Activated B cell treated with CpG ODN at 0.5 μM for 24 hours (primary cell): ENCODE measurements at regions of chr12 and their contacts with region 1.

Region 1: GRCh38 chr12:6937481-6938297 is 5.9 kb upstream of the RNU7-1 start:
- DNase-seq: peak; percentile 84
- ATAC-seq: peak; percentile 92
- H3K4me3 Mint-ChIP-seq: peak overlapping the region; percentile 84
- H3K27ac Mint-ChIP-seq: peak overlapping the region; percentile 91
- H3K4me1 Mint-ChIP-seq: peaks cover 35% of the 10 kb centered on the region
- H3K27me3 Mint-ChIP-seq: no peaks in the 10 kb centered on the region
- CTCF ChIP-seq: no peak

Region 2: DNA sequence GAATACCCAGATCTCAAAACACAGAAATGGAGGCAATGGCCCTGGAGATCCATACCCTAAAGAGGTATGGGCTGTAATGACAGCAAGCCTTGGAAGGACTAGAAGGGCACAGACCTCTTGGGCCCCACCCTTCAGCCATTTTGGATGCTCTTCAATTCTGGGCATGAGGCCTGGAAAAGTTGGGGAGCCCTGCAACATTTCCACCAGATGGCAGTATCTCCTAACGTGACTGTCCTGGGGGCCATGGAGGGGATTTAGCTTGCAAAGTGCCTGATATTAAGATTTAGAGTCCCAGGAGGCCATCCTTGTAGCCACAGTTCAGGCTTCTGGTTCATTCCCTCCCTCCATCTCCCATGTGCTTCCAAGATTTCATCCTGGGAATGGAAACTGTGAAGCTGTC is 1863.8 kb before region 1 on chr12:
- CTCF ChIA-PET with region 1: no interaction called
- POLR2A ChIA-PET with region 1: no interaction called
- intact Hi-C with region 1: no loop called
- DNase-seq: no peak
- ATAC-seq: no peak
- H3K4me3 Mint-ChIP-seq: no peak overlapping the region
- H3K27ac Mint-ChIP-seq: no peak overlapping the region
- H3K4me1 Mint-ChIP-seq: no peaks in the 10 kb centered on the region
- H3K27me3 Mint-ChIP-seq: peaks cover 8% of the 10 kb centered on the region
- CTCF ChIP-seq: no peak

Region 3: GRCh38 chr12:6627616-6628015 is 310.1 kb before region 1 on chr12:
- CTCF ChIA-PET with region 1: no interaction called
- POLR2A ChIA-PET with region 1: no interaction called
- intact Hi-C with region 1: no loop called
- DNase-seq: no peak
- ATAC-seq: peak; percentile 37
- H3K4me3 Mint-ChIP-seq: peak overlapping the region; percentile 81
- H3K27ac Mint-ChIP-seq: peak overlapping the region; percentile 85
- H3K4me1 Mint-ChIP-seq: peaks cover 60% of the 10 kb centered on the region
- H3K27me3 Mint-ChIP-seq: no peaks in the 10 kb centered on the region
- CTCF ChIP-seq: no peak

Region 4: GRCh38 chr12:6867413-6868210 is 70.1 kb before region 1 on chr12 and contains the start of gene TPI1:
- CTCF ChIA-PET with region 1: interaction called, 26 read pairs
- POLR2A ChIA-PET with region 1: interaction called, 87 read pairs
- intact Hi-C with region 1: loop called (anchors 1 kb)
- DNase-seq: peak; percentile 65
- ATAC-seq: peak; percentile 78
- H3K4me3 Mint-ChIP-seq: peak within 1 kb of the TSS; percentile 89
- H3K27ac Mint-ChIP-seq: peak within 1 kb of the TSS; percentile 84
- H3K4me1 Mint-ChIP-seq: peaks cover 51% of the 10 kb centered on the region
- H3K27me3 Mint-ChIP-seq: no peaks in the 10 kb centered on the region
- CTCF ChIP-seq: no peak
- total RNA-seq, gene TPI1: 306 and 318 TPM in 2 replicates

Region 5: DNA sequence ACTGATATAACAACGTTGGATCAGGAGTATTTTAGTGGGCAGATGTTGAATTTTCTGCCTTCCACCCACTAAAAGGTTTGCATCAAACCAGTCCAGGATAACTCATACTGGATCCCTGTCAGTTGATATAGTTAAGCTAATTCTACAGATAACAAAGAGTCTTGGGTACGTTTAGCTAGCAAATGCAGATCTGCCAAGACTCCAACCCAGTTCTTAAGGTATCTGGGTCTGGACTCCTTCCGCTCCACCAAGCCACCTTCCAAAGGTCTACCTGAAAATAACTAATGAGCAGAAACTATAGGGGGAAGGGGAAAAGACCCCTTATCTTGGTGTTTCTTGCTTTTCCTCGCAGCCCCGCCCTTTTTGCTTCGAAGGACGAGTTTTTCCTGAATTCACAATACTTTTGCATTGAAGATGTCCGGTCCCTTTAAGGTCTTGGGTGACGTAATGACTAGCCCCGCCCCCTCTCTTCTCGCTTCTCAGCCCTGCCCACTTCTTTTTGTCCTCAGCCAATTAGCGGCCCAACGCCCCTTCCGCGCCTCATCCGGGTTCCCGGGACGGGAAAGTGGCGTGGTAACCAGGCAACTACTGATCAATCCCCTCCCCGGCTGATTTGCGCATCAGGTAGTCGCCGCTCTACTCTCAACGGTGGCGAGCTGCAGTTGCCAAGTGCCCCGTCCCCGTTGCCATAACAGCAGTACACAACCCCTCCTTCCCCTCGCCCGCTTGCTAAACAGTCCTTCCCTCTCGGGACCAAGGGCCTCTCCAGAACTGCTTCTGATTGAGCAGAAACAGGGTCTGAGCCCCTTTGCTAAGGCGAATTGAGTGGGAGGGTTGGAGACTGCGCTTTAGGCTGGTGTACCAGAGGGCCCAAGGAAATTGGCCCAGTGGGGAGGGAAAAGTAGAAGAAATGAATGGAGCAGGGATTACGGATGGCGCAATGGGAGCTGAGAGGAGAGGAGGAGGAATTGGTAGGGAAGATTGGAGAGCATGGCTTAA is 33.1 kb before region 1 on chr12 and contains the start of gene LRRC23:
- CTCF ChIA-PET with region 1: interaction called, 3 read pairs
- POLR2A ChIA-PET with region 1: interaction called, 5 read pairs
- intact Hi-C with region 1: loop called (anchors 1 kb)
- DNase-seq: peak; percentile 87
- ATAC-seq: peak; percentile 98
- H3K4me3 Mint-ChIP-seq: no peak within 1 kb of the TSS
- H3K27ac Mint-ChIP-seq: no peak within 1 kb of the TSS
- H3K4me1 Mint-ChIP-seq: peaks cover 6% of the 10 kb centered on the region
- H3K27me3 Mint-ChIP-seq: no peaks in the 10 kb centered on the region
- CTCF ChIP-seq: no peak
- total RNA-seq, gene LRRC23: 7.7 and 8.8 TPM in 2 replicates

Region 6: GRCh38 chr12:6921996-6922946 is 15.4 kb before region 1 on chr12:
- CTCF ChIA-PET with region 1: interaction called, 23 read pairs
- POLR2A ChIA-PET with region 1: interaction called, 89 read pairs
- intact Hi-C with region 1: loop called (anchors 1 kb)
- DNase-seq: no peak
- ATAC-seq: peak; percentile 49
- H3K4me3 Mint-ChIP-seq: peak overlapping the region; percentile 9
- H3K27ac Mint-ChIP-seq: peak overlapping the region; percentile 78
- H3K4me1 Mint-ChIP-seq: peaks cover 50% of the 10 kb centered on the region
- H3K27me3 Mint-ChIP-seq: no peaks in the 10 kb centered on the region
- CTCF ChIP-seq: no peak

Region 7: GRCh38 chr12:6927379-6928024 is 10.2 kb before region 1 on chr12 and contains the start of gene ATN1:
- CTCF ChIA-PET with region 1: interaction called, 23 read pairs
- POLR2A ChIA-PET with region 1: interaction called, 89 read pairs
- intact Hi-C with region 1: loop called (anchors 1 kb)
- DNase-seq: peak; percentile 58
- ATAC-seq: peak; percentile 42
- H3K4me3 Mint-ChIP-seq: peak within 1 kb of the TSS; percentile 86
- H3K27ac Mint-ChIP-seq: peak within 1 kb of the TSS; percentile 86
- H3K4me1 Mint-ChIP-seq: peaks cover 54% of the 10 kb centered on the region
- H3K27me3 Mint-ChIP-seq: no peaks in the 10 kb centered on the region
- CTCF ChIP-seq: no peak
- total RNA-seq, gene ATN1: 42.8 and 50.9 TPM in 2 replicates